Prostate gland (tissue), 2 donors: ENCODE measurements at regions of chr6 and their contacts with region 1.

Region 1: DNA sequence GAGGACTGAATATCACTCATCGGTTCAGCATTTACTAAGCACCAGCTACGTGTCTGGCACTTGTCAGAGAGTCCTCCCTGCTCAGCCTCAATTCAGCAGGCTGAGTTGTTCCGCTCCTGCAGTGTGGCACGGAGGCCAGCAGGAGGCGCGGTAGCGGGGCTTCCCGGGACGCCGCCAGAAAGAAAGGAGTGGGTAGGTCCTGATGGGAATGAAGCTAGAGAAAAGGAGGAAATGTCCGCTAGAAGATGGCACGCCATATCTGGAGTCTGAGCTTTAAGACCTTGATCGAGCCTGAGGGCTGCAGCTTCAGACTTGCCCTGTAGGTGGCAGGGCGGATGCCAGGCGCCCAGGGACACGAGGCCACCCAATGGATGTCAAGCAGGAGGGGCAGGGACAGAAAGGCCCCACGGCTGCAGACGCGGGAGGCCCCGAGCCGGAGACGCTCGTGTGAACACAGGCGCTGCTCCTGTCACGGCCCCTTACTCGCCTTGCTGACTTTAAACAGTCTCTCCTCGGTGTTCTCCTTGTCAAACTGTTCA is 18.7 kb downstream of the SERPINB6 start:
- DNase-seq: peak; percentile 75
- H3K4me3 ChIP-seq: peak overlapping the region in 1 of 2 donors; percentile 1
- H3K27ac ChIP-seq: peak overlapping the region; percentile 28 to 62
- H3K4me1 ChIP-seq: no peaks in the 10 kb centered on the region
- H3K27me3 ChIP-seq: no peaks in the 10 kb centered on the region
- CTCF ChIP-seq: peak; percentile 92 to 97 (median 94)
- POLR2A ChIP-seq: peak; percentile 26

Region 2: GRCh38 chr6:2971420-2972218 is 19.0 kb after region 1 on chr6 and contains the start of gene SERPINB6:
- intact Hi-C with region 1: loop called (anchors 2 kb)
- DNase-seq: peak; percentile 69
- H3K4me3 ChIP-seq: peak within 1 kb of the TSS; percentile 82 to 85
- H3K27ac ChIP-seq: peak within 1 kb of the TSS; percentile 98 to 99
- H3K4me1 ChIP-seq: no peaks in the 10 kb centered on the region
- H3K27me3 ChIP-seq: no peaks in the 10 kb centered on the region
- CTCF ChIP-seq: peak in 1 of 4 experiments; percentile 8
- POLR2A ChIP-seq: peak; percentile 28
- total RNA-seq, gene SERPINB6: 155 to 202 TPM

Region 3: GRCh38 chr6:2988426-2989331 is 36.1 kb after region 1 on chr6:
- intact Hi-C with region 1: loop called (anchors 1 kb)
- DNase-seq: peak; percentile 85
- H3K4me3 ChIP-seq: peak overlapping the region; percentile 66 to 88
- H3K27ac ChIP-seq: peak overlapping the region; percentile 91 to 97
- H3K4me1 ChIP-seq: no peaks in the 10 kb centered on the region
- H3K27me3 ChIP-seq: no peaks in the 10 kb centered on the region
- CTCF ChIP-seq: peak; percentile 85 to 95 (median 90)
- POLR2A ChIP-seq: peak; percentile 47

Region 4: DNA sequence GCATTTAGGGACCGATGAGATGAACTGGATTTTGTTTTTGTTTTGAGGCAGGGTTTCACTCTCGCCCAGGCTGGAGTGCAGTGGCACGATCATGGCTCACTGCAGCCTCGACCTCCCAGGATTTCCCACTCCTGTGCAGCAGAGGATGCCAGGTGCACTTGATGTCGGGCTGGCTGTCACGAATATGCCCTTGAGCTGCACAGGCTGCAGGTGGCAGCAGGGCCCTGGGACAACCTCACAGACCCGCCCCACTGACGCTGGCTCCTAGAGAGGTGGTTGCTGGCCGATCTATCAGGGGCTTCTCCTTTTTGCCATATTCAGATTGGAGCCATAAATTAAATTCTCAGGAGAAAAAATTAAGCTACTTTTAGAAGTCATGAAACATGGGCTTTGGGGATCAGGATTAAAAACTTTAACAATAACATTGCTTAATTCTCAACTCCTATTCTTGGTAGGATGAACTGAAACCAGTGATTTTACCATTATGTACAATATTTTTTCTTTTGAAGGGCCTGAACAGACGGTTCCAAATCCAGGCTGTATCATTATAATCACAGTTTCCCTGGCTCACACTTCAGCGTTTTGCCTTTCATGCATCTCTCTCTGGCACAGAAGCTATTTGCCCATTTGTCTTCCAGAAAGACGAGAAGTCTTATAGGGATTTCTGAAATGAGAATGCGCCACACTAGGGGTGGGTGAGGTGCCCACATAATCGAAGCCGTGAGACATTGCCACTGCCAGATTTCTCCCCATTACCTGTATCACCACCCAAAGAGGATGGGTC is 79.4 kb after region 1 on chr6:
- intact Hi-C with region 1: no loop called
- DNase-seq: no peak
- H3K4me3 ChIP-seq: no peak overlapping the region
- H3K27ac ChIP-seq: no peak overlapping the region
- H3K4me1 ChIP-seq: no peaks in the 10 kb centered on the region
- H3K27me3 ChIP-seq: no peaks in the 10 kb centered on the region
- CTCF ChIP-seq: no peak
- POLR2A ChIP-seq: no peak

Region 5: DNA sequence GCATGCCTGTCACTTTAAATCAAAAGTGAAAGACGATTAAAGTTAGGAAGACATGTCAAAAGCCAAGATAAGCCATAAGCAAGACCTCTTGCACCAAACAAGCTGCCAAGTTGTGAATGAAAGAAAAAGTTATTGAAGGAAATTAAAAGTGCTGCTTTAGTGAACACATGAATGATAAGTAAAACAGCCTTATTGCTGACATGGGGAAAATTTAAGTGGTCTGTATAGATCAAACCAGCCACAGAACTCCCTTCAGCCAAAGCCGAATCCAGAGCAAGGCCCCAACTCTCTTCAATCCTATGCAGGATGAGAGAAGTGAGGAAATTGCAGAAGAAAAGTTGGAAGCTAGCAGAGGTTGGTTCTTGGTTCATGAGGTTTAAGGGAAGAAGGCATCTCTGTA is 106.3 kb after region 1 on chr6:
- intact Hi-C with region 1: loop called (anchors 2 kb)
- DNase-seq: no peak
- H3K4me3 ChIP-seq: no peak overlapping the region
- H3K27ac ChIP-seq: no peak overlapping the region
- H3K4me1 ChIP-seq: no peaks in the 10 kb centered on the region
- H3K27me3 ChIP-seq: no peaks in the 10 kb centered on the region
- CTCF ChIP-seq: no peak
- POLR2A ChIP-seq: no peak